CD4-positive, alpha-beta T cell (primary cell): ENCODE measurements at regions of chr1 and their contacts with region 1.

Region 1: GRCh38 chr1:24481101-24481500 is 21.5 kb upstream of the RCAN3 start:
- DNase-seq: peak in 13 of 14 experiments; percentile 23 to 90 (median 53)
- ATAC-seq: peak; percentile 70
- H3K4me3 ChIP-seq: no peak overlapping the region
- H3K4me3 Mint-ChIP-seq: peak overlapping the region; percentile 90
- H3K27ac ChIP-seq: peak overlapping the region; percentile 25 to 81
- H3K27ac Mint-ChIP-seq: peak overlapping the region; percentile 98
- H3K4me1 ChIP-seq: peaks cover 63% of the 10 kb centered on the region
- H3K4me1 Mint-ChIP-seq: peaks cover 63% of the 10 kb centered on the region
- H3K27me3 ChIP-seq: no peaks in the 10 kb centered on the region
- H3K27me3 Mint-ChIP-seq: no peaks in the 10 kb centered on the region
- CTCF ChIP-seq: no peak

Region 2: DNA sequence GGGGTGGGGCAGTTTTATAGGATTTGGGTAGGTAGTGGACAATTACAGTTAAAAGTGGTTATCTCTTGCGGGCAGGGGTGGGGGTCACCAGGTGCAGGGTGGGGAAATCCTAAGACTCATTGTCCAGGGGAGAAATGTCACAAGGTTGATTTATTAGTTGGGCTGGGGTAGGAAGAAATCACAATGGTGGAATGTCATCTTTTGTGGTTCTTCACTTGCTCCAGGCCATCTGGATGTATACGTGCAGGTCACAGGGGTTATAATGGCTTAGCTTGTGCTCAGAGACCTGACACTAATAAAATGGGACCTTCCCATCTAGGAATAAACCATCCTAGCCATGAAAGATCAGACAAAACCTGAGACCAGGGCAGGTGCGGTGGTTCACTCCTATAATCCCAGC is 1477.0 kb before region 1 on chr1:
- CTCF ChIA-PET with region 1: no interaction called
- POLR2A ChIA-PET with region 1: no interaction called
- intact Hi-C with region 1: no loop called
- DNase-seq: no peak
- ATAC-seq: no peak
- H3K4me3 ChIP-seq: no peak overlapping the region
- H3K4me3 Mint-ChIP-seq: no peak overlapping the region
- H3K27ac ChIP-seq: no peak overlapping the region
- H3K27ac Mint-ChIP-seq: no peak overlapping the region
- H3K4me1 ChIP-seq: no peaks in the 10 kb centered on the region
- H3K4me1 Mint-ChIP-seq: no peaks in the 10 kb centered on the region
- H3K27me3 ChIP-seq: peaks cover 0 to 8% of the 10 kb centered on the region in 2 experiments
- H3K27me3 Mint-ChIP-seq: peaks cover 9% of the 10 kb centered on the region
- CTCF ChIP-seq: no peak

Region 3: DNA sequence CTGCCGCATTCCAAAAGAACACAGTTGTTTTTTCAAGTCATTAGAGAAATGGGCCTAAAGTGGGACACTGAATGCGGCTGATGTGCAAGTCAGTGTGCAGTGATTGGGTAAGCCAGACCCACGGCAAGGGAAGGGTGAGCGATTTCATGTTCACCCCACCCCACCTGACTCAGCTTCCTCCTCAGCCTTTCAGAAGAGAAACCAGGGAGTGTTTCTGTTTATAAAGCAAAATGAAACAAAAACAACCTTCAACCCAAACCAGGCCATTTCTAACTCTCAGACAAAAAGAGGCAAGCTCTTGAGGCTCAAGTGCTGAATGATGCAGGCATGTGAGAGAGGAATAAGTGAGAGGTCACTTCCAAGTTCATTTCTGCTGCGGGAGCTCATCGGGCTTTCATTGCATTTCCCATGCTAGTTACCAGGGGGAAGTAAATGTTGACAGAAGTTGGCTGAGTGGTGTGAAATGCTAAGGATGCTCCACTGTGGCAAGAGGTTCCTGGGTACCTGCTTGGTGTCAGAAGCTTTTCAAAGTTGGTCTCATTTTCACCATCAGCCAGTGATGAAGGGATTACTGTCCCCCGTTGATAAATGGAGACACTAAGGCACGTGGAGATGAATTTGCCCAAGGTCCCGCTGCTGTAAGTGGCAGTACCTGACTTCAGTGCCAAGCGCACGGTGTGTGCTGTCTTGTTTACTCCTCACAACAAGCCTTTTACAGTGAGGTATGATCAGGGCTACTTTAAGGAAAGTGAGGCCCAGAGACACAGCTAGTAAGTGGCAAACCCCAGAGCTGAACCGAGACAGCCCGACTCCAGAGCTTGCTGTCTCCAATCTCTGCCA is 96.6 kb before region 1 on chr1:
- CTCF ChIA-PET with region 1: no interaction called
- POLR2A ChIA-PET with region 1: no interaction called
- intact Hi-C with region 1: no loop called
- DNase-seq: peak in 7 of 14 experiments; percentile 21 to 64 (median 43)
- ATAC-seq: peak; percentile 24
- H3K4me3 ChIP-seq: no peak overlapping the region
- H3K4me3 Mint-ChIP-seq: no peak overlapping the region
- H3K27ac ChIP-seq: no peak overlapping the region
- H3K27ac Mint-ChIP-seq: no peak overlapping the region
- H3K4me1 ChIP-seq: peaks cover 27% of the 10 kb centered on the region
- H3K4me1 Mint-ChIP-seq: no peaks in the 10 kb centered on the region
- H3K27me3 ChIP-seq: no peaks in the 10 kb centered on the region
- H3K27me3 Mint-ChIP-seq: no peaks in the 10 kb centered on the region
- CTCF ChIP-seq: no peak

Region 4: DNA sequence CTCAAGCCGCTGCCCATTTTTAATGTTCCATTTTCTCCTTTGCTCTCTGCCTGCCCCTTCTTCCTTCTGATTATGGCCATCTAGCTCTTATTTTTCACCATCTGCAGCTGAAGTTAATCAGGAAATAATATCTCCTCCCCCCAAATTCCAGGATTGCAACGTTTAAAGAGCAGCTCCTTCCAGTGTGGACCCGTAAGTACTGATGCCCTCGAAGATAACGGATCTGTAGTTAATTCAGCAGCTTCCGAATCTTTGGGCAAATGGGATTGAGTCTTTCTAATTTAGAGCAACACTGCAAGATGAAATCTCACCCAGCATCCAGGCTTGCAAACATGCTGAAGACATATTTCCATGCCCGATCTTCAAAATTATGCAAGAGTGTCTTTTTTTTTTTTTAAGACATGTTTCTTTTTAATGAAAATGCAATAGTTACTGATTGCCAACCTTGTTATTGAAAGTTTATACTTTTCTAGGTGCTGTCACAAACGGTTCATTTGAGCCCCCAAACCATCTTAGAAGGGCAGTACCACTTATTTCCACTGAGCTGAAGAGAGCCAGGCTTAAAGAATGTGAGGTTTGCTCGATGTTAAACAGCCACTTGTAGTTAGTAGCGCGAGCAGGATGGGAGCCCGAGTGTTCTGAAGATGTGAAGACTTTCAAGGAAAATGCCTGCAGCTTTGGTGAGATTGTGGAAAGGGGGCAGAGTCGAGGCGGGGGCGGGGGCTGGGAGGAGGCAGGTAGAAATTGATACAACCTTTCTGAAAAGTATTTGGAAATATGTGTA is 10.7 kb after region 1 on chr1:
- CTCF ChIA-PET with region 1: no interaction called
- POLR2A ChIA-PET with region 1: interaction called, 14 read pairs
- intact Hi-C with region 1: no loop called
- DNase-seq: no peak
- ATAC-seq: peak; percentile 54
- H3K4me3 ChIP-seq: no peak overlapping the region
- H3K4me3 Mint-ChIP-seq: peak overlapping the region; percentile 17
- H3K27ac ChIP-seq: no peak overlapping the region
- H3K27ac Mint-ChIP-seq: peak overlapping the region; percentile 22
- H3K4me1 ChIP-seq: peaks cover 26% of the 10 kb centered on the region
- H3K4me1 Mint-ChIP-seq: peaks cover 40% of the 10 kb centered on the region
- H3K27me3 ChIP-seq: no peaks in the 10 kb centered on the region
- H3K27me3 Mint-ChIP-seq: no peaks in the 10 kb centered on the region
- CTCF ChIP-seq: no peak

Region 5: DNA sequence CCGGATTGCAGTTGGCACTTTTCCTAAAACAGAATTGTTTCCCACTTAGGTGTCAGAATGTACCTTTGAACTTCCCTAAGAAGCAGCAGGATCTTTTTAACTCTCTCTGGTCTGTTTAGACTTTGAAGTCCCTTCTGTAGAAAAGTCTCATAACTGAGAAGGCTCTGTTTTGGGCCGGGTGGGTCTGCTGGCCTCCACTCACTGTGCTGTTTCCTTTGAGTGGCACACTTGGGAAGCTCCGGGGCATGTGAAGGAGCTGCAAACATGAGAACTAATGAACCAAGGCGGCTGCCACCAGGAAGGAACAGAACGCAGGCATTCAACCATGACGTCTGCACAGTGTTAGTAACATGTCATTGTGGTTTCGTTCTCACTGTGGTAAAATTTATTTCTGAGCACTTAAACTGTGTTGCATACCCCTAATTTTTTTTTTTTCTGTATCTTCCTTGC is 55.3 kb after region 1 on chr1:
- CTCF ChIA-PET with region 1: no interaction called
- POLR2A ChIA-PET with region 1: interaction called, 7 read pairs
- intact Hi-C with region 1: loop called (anchors 1 to 10 kb)
- DNase-seq: peak; percentile 41 to 94 (median 64)
- ATAC-seq: peak; percentile 80
- H3K4me3 ChIP-seq: no peak overlapping the region
- H3K4me3 Mint-ChIP-seq: peak overlapping the region; percentile 86
- H3K27ac ChIP-seq: peak overlapping the region; percentile 86 to 95
- H3K27ac Mint-ChIP-seq: peak overlapping the region; percentile 96
- H3K4me1 ChIP-seq: peaks cover 43% of the 10 kb centered on the region
- H3K4me1 Mint-ChIP-seq: peaks cover 79% of the 10 kb centered on the region
- H3K27me3 ChIP-seq: no peaks in the 10 kb centered on the region
- H3K27me3 Mint-ChIP-seq: no peaks in the 10 kb centered on the region
- CTCF ChIP-seq: no peak